Mammary epithelial cell (primary cell): ENCODE measurements at regions of chr1 and their contacts with region 1.

Region 1: GRCh38 chr1:34742667-34743270 is 12.1 kb upstream of the GJB5 start:
- DNase-seq: peak; percentile 63
- H3K4me3 ChIP-seq: no peak overlapping the region
- H3K27ac ChIP-seq: no peak overlapping the region
- H3K4me1 ChIP-seq: no peaks in the 10 kb centered on the region
- H3K27me3 ChIP-seq: no peaks in the 10 kb centered on the region
- CTCF ChIP-seq: peak; percentile 92 to 98

Region 2: GRCh38 chr1:33633019-33633801 is 1109.6 kb before region 1 on chr1:
- CTCF ChIA-PET with region 1: interaction called, 8 read pairs
- dilution Hi-C with region 1: no loop called
- in situ Hi-C with region 1: loop called (anchors 10 to 25 kb)
- intact Hi-C with region 1: loop called (anchors 1 kb)
- DNase-seq: peak; percentile 62
- H3K4me3 ChIP-seq: no peak overlapping the region
- H3K27ac ChIP-seq: no peak overlapping the region
- H3K4me1 ChIP-seq: no peaks in the 10 kb centered on the region
- H3K27me3 ChIP-seq: no peaks in the 10 kb centered on the region
- CTCF ChIP-seq: peak; percentile 97 to 99

Region 3: DNA sequence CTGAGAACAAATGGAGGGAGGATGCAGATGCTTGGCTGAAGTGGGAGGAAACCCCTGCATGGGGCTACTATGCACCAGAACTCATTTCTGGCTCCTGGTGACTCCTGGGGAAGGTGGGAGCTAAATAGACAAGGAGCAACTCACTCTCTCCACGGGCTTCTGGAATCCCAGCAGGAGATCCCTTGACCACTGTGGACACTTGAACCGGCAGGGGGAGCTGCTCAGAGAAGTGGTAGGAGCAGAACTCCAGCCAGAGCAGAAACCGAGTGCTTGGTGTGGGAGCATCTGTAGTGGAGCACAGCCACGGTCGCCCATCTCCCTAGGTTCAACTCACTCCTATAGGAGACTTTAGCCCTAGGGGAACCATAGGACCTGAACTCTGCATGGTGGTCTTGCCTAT is 193.6 kb before region 1 on chr1:
- CTCF ChIA-PET with region 1: no interaction called
- dilution Hi-C with region 1: no loop called
- in situ Hi-C with region 1: no loop called
- intact Hi-C with region 1: loop called (anchors 1 kb)
- DNase-seq: peak; percentile 18
- H3K4me3 ChIP-seq: no peak overlapping the region
- H3K27ac ChIP-seq: no peak overlapping the region
- H3K4me1 ChIP-seq: no peaks in the 10 kb centered on the region
- H3K27me3 ChIP-seq: no peaks in the 10 kb centered on the region
- CTCF ChIP-seq: peak; percentile 15 to 47

Region 4: DNA sequence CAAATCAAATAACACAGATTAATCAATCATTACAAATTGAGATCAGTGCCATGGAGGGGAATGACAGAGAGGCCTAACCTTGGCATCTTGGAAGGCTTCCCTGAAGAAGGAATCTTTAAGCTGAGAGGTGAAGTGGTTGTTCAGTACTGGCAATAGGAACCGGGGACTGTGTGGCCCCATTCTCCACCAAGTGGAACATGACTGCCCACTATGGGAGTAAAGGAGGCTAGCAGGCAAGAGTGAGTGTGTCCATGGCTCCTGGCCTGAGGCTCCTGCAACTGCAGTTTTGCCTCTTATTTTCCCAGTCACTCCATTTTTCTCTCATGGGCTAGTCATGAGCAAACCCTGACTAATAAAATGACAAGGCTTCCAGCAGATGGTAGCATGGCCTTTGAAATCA is 100.1 kb before region 1 on chr1:
- CTCF ChIA-PET with region 1: no interaction called
- dilution Hi-C with region 1: no loop called
- in situ Hi-C with region 1: no loop called
- intact Hi-C with region 1: no loop called
- DNase-seq: no peak
- H3K4me3 ChIP-seq: no peak overlapping the region
- H3K27ac ChIP-seq: no peak overlapping the region
- H3K4me1 ChIP-seq: no peaks in the 10 kb centered on the region
- H3K27me3 ChIP-seq: no peaks in the 10 kb centered on the region
- CTCF ChIP-seq: peak in 1 of 2 donors; percentile 13

Region 5: DNA sequence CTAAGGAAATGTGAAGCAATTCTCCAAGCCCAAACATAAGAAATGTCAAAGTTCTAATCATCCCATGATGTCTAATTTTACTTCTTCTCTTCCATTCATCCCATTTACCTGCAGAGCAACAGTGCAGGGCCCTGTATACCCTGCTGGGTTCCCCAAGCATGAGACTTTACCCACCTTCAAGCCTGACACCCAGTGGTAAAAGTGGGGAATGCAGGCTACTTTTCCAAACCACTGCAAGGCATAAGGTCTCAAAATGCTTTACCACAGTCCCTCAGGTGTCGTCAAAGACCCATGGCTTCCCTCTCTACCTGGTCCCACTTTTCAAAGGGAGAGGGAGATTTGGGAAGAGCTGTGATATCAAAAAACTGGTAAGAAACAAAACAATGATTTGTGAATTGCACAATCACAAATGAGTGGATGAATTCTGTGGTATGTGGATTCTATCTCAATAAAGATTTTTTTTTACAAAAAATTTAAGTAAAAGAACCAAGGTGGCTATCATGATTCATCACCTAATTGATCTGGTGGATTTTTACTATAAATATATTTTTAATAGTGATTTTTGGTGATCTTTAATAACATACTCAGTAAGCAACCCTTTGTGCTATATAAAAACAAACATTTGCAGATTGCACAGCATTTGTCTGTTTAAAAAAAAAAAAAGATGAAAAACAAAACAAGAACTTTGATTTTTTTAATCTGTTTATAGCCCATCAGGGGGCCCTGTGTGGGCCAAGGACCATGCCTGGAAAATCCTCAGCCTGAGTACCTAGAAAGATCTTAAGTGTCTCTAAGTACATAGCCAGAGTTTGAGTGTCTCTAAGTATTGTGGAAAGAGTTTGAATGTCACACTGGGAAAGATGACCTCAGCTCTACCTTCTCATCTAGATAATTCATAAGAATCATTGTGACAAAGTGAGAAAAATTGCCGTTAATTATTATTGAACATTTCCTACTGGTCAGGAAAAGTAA is 61.0 kb before region 1 on chr1:
- CTCF ChIA-PET with region 1: no interaction called
- dilution Hi-C with region 1: no loop called
- in situ Hi-C with region 1: no loop called
- intact Hi-C with region 1: loop called (anchors 5 kb)
- DNase-seq: peak; percentile 39
- H3K4me3 ChIP-seq: no peak overlapping the region
- H3K27ac ChIP-seq: no peak overlapping the region
- H3K4me1 ChIP-seq: no peaks in the 10 kb centered on the region
- H3K27me3 ChIP-seq: no peaks in the 10 kb centered on the region
- CTCF ChIP-seq: peak; percentile 91 to 94

Region 6: GRCh38 chr1:34786521-34787325 is 44.0 kb after region 1 on chr1:
- CTCF ChIA-PET with region 1: interaction called, 3 read pairs
- dilution Hi-C with region 1: no loop called
- in situ Hi-C with region 1: no loop called
- intact Hi-C with region 1: loop called (anchors 1 kb)
- DNase-seq: peak; percentile 48
- H3K4me3 ChIP-seq: no peak overlapping the region
- H3K27ac ChIP-seq: peak overlapping the region; percentile 18
- H3K4me1 ChIP-seq: peaks cover 37% of the 10 kb centered on the region
- H3K27me3 ChIP-seq: no peaks in the 10 kb centered on the region
- CTCF ChIP-seq: peak; percentile 84